ENCODE measurements at regions of chr17 and their contacts with region 1.

Region 1: GRCh38 chr17:75632863-75633485 is at the start of gene SMIM5:
- DNase-seq: peak; percentile 45
- H3K4me3 ChIP-seq: no peak within 1 kb of the TSS
- H3K27me3 ChIP-seq: no peaks in the 10 kb centered on the region
- CTCF ChIP-seq: peak; percentile 96
- polyA plus RNA-seq, gene SMIM5: 0.10 TPM in 1 of 2 replicates, not detected in the other

Region 2: DNA sequence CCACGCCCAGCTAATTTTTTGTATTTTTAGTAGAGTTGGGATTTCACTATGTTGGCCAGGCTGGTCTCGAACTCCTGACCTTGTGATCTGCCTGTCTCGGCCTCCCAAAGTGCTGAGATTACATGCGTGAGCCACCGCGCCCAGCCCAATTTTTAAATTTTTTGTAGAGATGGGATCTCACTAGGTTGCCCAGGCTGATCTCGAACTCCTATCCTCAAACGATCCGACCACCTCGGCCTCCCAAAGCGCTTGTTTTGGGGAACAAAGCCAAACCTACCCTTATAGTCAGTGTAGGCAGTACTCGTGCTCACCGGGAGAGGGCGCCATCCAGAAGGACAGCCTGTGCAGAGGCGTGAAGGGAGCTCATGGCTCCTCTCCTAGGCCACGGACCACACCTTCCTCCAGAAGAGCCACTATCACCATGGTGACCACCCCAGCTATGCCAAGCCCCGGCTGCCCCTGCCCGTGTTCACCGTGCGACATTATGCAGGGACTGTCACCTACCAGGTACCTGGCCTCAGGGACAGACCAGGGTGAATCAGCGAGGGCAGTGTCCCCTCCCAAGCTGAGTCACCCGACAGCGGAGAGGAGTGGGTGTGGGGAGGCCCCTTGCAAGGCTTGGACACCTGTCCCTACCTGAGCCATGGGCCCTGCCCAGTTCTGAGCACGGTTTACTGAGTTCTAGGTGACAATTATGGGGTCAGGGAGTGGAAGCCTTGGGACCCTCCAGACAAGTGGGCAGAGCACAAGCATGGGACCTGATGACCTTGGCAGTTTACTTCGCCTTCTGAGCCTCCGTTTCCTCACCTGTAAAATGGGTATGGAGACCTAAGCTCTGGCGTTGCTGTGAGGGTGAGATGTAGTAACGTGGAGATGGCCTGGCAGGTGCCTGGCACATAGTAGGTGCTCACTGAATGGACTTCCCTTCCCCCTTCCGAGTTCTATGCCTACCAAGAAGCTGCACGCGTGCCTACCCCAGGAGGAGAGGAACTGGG is 31.6 kb before region 1 on chr17:
- CTCF ChIA-PET with region 1: interaction called, 17 read pairs
- POLR2A ChIA-PET with region 1: no interaction called
- DNase-seq: no peak
- H3K4me3 ChIP-seq: no peak overlapping the region
- H3K27me3 ChIP-seq: no peaks in the 10 kb centered on the region
- CTCF ChIP-seq: peak; percentile 70

Region 3: DNA sequence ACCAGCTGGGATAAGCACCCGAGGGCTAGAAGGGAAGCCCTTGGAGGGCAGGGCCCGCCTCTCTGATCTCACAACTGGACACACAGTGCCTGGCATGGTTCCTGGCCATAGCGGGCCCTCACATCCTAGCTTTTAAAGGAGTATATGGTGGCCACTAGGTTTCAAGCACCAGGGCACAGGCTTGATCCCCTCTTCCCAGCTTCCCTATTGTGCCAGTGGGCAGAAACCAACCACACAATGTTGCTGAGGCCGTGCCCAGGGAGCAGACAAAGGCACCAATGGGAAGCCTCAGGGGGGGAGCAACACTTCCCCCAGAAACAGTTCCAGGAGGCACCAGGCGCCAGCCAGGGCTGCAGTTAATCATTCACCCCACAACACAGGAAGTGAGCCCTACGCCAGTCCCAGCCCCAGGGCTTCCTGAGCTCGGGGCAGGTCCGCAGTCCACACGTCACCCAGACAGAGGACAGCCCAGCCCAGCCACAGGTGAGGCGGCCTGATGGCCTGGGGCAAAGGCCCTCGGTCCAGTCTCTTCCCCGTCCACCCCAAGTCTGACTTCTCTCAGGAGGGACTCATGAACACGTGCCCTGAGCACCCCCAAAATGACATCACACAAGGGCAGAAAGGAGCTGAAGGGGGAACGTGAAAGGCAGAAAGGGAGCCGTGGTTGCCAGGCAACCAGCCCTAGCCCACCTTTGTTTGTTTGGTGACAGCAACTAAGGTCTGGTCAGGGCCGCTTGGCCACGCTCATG is 13.1 kb after region 1 on chr17:
- CTCF ChIA-PET with region 1: interaction called, 149 read pairs
- POLR2A ChIA-PET with region 1: no interaction called
- DNase-seq: no peak
- H3K4me3 ChIP-seq: no peak overlapping the region
- H3K27me3 ChIP-seq: no peaks in the 10 kb centered on the region
- CTCF ChIP-seq: no peak

Region 4: GRCh38 chr17:75673487-75673886 is 40.5 kb after region 1 on chr17:
- CTCF ChIA-PET with region 1: interaction called, 31 read pairs
- POLR2A ChIA-PET with region 1: no interaction called
- DNase-seq: no peak
- H3K4me3 ChIP-seq: no peak overlapping the region
- H3K27me3 ChIP-seq: no peaks in the 10 kb centered on the region
- CTCF ChIP-seq: no peak

Region 5: DNA sequence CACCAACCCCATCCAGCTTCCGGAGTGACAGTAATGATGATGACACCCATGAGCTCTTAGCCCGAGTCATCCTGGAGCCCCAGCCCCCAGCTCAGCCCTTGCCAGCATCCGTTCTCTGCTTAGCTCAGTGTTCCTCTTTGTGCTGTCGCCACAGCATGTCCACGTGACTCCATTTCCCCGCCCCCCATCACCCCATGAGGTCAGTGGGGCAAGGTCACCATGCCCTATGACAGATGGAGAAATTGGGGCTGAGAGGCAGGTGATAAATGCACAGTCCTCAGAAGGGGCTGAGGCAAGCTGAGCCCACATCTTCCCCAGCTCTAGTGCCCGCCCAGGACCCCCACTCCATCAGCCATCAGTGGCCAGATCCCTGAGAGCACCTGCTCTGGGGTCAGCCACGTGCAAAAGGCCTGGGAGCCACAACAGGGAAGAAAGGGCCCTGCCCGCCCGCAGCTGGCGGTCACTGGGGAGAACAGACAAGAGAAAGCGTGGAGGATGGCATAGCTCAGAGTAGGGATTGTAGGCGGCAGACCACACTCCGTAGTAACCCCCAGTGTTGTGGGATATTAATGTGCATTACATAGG is 105.3 kb after region 1 on chr17:
- CTCF ChIA-PET with region 1: interaction called, 502 read pairs
- POLR2A ChIA-PET with region 1: no interaction called
- DNase-seq: no peak
- H3K4me3 ChIP-seq: no peak overlapping the region
- H3K27me3 ChIP-seq: no peaks in the 10 kb centered on the region
- CTCF ChIP-seq: no peak

Region 6: DNA sequence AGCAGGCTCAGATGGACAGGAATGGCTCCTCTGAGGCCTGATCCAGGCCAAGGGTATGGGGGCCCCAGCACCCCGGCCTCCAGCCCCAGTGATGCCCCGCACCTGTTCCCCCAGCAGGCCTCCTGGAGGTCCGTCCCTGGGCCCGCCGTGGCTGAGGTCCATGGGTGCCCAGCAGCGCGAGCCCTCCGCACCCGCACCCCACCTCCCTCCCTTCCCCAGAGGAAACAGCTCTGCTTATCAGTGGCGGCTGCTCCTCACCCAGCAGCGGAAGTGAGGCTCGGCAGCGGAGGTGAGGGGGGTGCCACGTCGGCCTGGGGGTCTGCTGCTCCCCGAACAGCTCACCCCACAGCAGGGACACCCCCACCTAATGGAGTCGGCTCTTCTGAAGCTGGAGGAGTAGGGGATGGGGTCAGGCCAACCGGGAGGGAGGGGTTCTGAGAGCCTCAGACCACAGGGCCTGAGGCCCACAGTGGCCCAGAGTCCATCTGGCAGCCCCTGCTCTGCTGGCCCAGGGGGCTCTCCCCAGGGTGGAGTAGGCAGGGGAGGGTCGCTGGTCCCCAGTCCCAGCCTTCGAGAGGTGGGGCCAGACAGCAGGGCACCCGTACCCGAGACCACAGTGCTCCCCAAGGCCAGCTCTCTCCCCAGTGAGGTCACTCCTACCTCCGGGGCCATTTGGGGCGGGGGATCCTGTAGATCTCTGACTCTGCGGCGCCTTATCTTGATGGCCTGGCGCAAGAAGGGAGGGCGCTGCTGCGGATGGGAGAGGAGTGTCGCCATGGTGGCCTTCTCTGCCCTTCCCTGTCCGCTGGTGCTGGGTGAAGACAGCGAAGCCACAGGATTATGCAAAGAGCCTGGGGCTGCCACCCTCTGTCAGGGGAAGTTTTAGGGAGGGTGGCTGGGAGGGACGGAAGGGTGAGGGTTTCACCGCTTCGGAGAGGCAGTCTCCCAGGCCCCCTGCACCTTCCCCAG is 210.9 kb after region 1 on chr17 and contains the start of gene UNC13D:
- CTCF ChIA-PET with region 1: no interaction called
- POLR2A ChIA-PET with region 1: no interaction called
- DNase-seq: no peak
- H3K4me3 ChIP-seq: no peak within 1 kb of the TSS
- H3K27me3 ChIP-seq: no peaks in the 10 kb centered on the region
- CTCF ChIP-seq: no peak
- polyA plus RNA-seq, gene UNC13D: 0.28 and 0.40 TPM in 2 replicates

Measured in BJ (cell line).